Activated CD4-positive, alpha-beta T cell treated with anti-CD3 and anti-CD28 coated beads for 36 hours (primary cell): ENCODE measurements at regions of chr2 and their contacts with region 1.

Region 1: DNA sequence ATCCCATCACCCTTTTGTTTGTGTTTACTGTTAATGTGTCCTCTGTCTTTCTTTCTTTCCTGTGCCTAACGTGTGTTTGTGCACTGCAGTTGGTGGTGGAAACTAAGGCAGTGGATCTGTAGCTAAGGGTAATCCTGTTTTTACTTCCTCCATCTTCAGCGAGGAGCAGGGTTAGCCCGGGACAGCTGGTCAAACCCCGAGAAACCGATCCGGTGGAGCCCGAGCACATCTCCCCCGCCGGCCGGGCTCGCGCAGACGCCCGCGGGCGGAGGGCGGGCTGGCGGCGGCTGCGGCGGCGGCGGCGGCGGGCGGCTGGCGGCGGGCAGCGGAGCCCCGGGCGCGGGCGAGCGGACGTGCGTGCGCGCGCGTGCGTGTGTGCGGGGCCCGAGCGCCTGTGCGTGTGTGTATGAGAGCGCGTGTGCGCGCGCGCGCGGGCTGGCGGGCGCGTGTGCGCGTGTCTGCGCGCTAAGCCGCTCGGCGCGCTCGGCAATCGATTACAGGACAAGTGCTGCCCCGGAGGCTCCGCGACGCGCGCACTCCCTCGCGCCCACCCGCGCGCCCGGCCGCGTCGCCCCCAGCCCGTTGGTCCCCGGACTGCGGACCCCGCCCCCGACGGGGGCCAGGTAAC is at the start of gene IKZF2:
- DNase-seq: peak; percentile 82
- ATAC-seq: peak; percentile 77
- H3K4me3 Mint-ChIP-seq: peak within 1 kb of the TSS; percentile 88
- H3K27ac Mint-ChIP-seq: peak within 1 kb of the TSS; percentile 85
- H3K4me1 Mint-ChIP-seq: peaks cover 35% of the 10 kb centered on the region
- H3K27me3 Mint-ChIP-seq: peaks cover 32% of the 10 kb centered on the region
- total RNA-seq, gene IKZF2: 6.3 to 8.3 TPM

Region 2: DNA sequence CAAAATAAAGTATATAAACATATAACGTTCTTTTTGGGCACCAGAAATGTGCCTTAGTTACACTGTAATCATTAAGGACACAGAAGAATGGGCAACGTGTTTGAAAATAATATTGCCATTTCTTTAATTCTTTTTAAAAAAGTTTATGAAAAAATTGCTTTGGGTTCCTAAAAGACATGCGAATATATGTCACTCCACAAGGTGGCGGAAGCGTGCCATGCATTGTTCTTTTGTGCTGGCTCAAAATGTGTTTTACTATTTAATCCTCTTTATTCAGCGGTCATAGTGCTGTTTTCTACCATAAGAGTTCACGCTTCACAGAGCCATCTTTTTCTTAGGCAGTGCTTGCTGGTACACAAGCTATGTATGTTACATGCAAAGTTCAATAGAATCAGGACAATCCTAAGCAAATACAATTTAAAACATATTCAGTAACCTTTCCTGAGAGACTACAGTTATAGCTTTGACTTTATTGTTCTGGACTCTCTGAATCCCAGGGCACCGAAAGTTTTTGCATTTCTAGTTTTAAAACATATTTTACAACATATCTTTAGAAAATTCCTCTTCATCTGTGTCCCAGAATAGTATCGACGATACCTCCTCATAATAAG is 465.2 kb before region 1 on chr2:
- CTCF ChIA-PET with region 1: interaction called, 4 read pairs
- POLR2A ChIA-PET with region 1: no interaction called
- intact Hi-C with region 1: loop called (anchors 1 kb)
- DNase-seq: peak; percentile 78
- ATAC-seq: peak; percentile 53
- H3K4me3 Mint-ChIP-seq: no peak overlapping the region
- H3K27ac Mint-ChIP-seq: no peak overlapping the region
- H3K4me1 Mint-ChIP-seq: peaks cover 2% of the 10 kb centered on the region
- H3K27me3 Mint-ChIP-seq: peaks cover 5% of the 10 kb centered on the region

Region 3: GRCh38 chr2:212863185-212863588 is 288.4 kb before region 1 on chr2:
- CTCF ChIA-PET with region 1: interaction called, 12 read pairs
- POLR2A ChIA-PET with region 1: interaction called, 6 read pairs
- intact Hi-C with region 1: loop called (anchors 1 kb)
- DNase-seq: peak; percentile 63
- ATAC-seq: peak; percentile 60
- H3K4me3 Mint-ChIP-seq: no peak overlapping the region
- H3K27ac Mint-ChIP-seq: no peak overlapping the region
- H3K4me1 Mint-ChIP-seq: peaks cover 2% of the 10 kb centered on the region
- H3K27me3 Mint-ChIP-seq: no peaks in the 10 kb centered on the region

Region 4: GRCh38 chr2:212958757-212959295 is 192.7 kb before region 1 on chr2:
- CTCF ChIA-PET with region 1: interaction called, 5 read pairs
- POLR2A ChIA-PET with region 1: no interaction called
- intact Hi-C with region 1: loop called (anchors 5 kb)
- DNase-seq: no peak
- ATAC-seq: no peak
- H3K4me3 Mint-ChIP-seq: no peak overlapping the region
- H3K27ac Mint-ChIP-seq: peak overlapping the region; percentile 62
- H3K4me1 Mint-ChIP-seq: peaks cover 47% of the 10 kb centered on the region
- H3K27me3 Mint-ChIP-seq: no peaks in the 10 kb centered on the region

Region 5: DNA sequence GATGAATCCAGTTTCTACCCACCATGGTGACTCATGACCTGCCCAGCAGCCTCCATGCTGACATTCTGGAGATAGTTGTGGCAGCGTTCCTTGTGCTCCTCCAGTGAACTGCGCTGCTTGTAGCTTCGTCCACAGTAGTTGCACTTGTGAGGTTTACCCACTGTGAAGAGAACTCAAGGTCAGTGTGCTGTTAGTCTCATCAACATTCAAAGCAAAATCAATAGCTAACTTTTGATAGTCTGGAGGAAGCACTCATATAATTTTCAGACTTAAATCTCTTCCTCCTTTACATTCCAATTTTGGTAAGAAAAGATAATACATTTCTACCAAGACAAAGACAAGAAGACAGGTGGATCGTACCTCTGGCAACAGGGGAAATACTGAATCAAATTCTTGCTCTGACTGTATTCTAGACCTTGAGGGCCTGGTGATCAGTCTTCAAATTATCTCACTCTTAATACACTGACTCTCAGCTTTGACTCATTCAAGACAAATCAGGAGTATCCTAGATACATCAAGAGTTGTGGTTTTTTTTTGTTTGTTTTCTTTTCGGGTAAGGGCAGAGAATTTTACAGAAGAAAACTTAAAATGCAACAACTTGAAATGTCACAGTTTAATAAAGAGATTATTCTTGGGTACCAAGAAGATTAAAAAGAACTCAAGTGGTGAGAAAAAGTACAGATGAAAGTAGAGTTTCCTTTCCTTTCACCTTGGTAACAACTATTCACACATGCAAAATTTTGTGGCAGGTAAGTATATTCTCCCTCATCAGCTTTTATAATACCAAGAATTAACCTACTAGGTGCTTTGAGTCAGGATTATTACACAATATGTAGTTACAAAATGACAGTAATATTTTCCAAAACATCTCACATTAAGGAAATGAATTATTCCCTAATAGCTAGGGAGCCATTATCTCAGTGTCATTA is 129.3 kb before region 1 on chr2:
- CTCF ChIA-PET with region 1: interaction called, 4 read pairs
- POLR2A ChIA-PET with region 1: no interaction called
- intact Hi-C with region 1: loop called in 1 of 2 experiments (anchors 2 kb)
- DNase-seq: peak; percentile 33
- ATAC-seq: peak; percentile 97
- H3K4me3 Mint-ChIP-seq: peak overlapping the region; percentile 5
- H3K27ac Mint-ChIP-seq: peak overlapping the region; percentile 49
- H3K4me1 Mint-ChIP-seq: peaks cover 25% of the 10 kb centered on the region
- H3K27me3 Mint-ChIP-seq: peaks cover 11% of the 10 kb centered on the region

Region 6: GRCh38 chr2:213119061-213119856 is 32.3 kb before region 1 on chr2:
- CTCF ChIA-PET with region 1: interaction called, 3 read pairs
- POLR2A ChIA-PET with region 1: no interaction called
- intact Hi-C with region 1: loop called in 1 of 2 experiments (anchors 2 kb)
- DNase-seq: peak; percentile 45
- ATAC-seq: peak; percentile 92
- H3K4me3 Mint-ChIP-seq: peak overlapping the region; percentile 19
- H3K27ac Mint-ChIP-seq: peak overlapping the region; percentile 84
- H3K4me1 Mint-ChIP-seq: peaks cover 55% of the 10 kb centered on the region
- H3K27me3 Mint-ChIP-seq: no peaks in the 10 kb centered on the region